ENCODE measurements at regions of chr2 and their contacts with region 1.

Region 1: GRCh38 chr2:98518090-98518489 is 73.4 kb downstream of the INPP4A start:
- DNase-seq: peak; percentile 38 to 77 (median 62)
- ATAC-seq: peak; percentile 85 to 89 (median 86)
- H3K4me3 ChIP-seq: no peak overlapping the region
- H3K4me3 Mint-ChIP-seq: no peak overlapping the region
- H3K27ac ChIP-seq: no peak overlapping the region
- H3K27ac Mint-ChIP-seq: peak overlapping the region in 1 of 2 donors; percentile 55
- H3K4me1 ChIP-seq: peaks cover 8 to 46% of the 10 kb centered on the region in 2 experiments
- H3K4me1 Mint-ChIP-seq: peaks cover 53 to 60% (median 57%) of the 10 kb centered on the region in 3 donors
- H3K27me3 ChIP-seq: no peaks in the 10 kb centered on the region
- H3K27me3 Mint-ChIP-seq: no peaks in the 10 kb centered on the region

Region 2: GRCh38 chr2:98412751-98413458 is 105.2 kb before region 1 on chr2:
- CTCF ChIA-PET with region 1: interaction called, 8 to 12 read pairs
- POLR2A ChIA-PET with region 1: interaction called in 1 of 2 experiments, 5 read pairs
- DNase-seq: peak in 33 of 35 experiments; percentile 13 to 89 (median 43)
- ATAC-seq: peak; percentile 84 to 90 (median 84)
- H3K4me3 ChIP-seq: no peak overlapping the region
- H3K4me3 Mint-ChIP-seq: no peak overlapping the region
- H3K27ac ChIP-seq: no peak overlapping the region
- H3K27ac Mint-ChIP-seq: peak overlapping the region in 1 of 2 donors; percentile 39
- H3K4me1 ChIP-seq: peaks cover 5 to 8% of the 10 kb centered on the region in 2 experiments
- H3K4me1 Mint-ChIP-seq: peaks cover 4 to 6% (median 6%) of the 10 kb centered on the region in 3 donors
- H3K27me3 ChIP-seq: no peaks in the 10 kb centered on the region
- H3K27me3 Mint-ChIP-seq: no peaks in the 10 kb centered on the region

Region 3: DNA sequence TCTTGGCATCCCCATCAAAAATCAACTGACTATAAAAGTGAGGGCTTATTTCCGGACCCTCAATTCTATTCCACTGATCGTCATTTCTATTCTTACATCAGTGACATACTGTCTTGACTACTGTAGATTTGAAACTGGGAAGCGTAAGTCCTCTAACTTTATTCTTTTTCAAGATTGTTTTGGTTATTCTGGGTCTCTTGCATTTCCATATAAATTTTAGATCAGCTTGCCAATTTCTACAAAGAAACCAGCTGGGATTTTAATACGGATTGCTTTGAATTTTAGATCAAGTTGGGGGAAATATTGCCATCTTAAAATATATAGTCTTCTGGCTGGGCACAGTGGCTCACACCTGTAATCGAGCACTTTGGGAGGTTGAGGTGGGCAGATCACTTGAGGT is 91.3 kb before region 1 on chr2:
- CTCF ChIA-PET with region 1: no interaction called
- POLR2A ChIA-PET with region 1: no interaction called
- DNase-seq: no peak
- ATAC-seq: no peak
- H3K4me3 ChIP-seq: no peak overlapping the region
- H3K4me3 Mint-ChIP-seq: no peak overlapping the region
- H3K27ac ChIP-seq: no peak overlapping the region
- H3K27ac Mint-ChIP-seq: no peak overlapping the region
- H3K4me1 ChIP-seq: no peaks in the 10 kb centered on the region
- H3K4me1 Mint-ChIP-seq: no peaks in the 10 kb centered on the region
- H3K27me3 ChIP-seq: no peaks in the 10 kb centered on the region
- H3K27me3 Mint-ChIP-seq: no peaks in the 10 kb centered on the region

Region 4: GRCh38 chr2:98577313-98577712 is 59.2 kb after region 1 on chr2:
- CTCF ChIA-PET with region 1: no interaction called
- POLR2A ChIA-PET with region 1: no interaction called
- DNase-seq: no peak
- ATAC-seq: no peak
- H3K4me3 ChIP-seq: no peak overlapping the region
- H3K4me3 Mint-ChIP-seq: no peak overlapping the region
- H3K27ac ChIP-seq: no peak overlapping the region
- H3K27ac Mint-ChIP-seq: no peak overlapping the region
- H3K4me1 ChIP-seq: no peaks in the 10 kb centered on the region
- H3K4me1 Mint-ChIP-seq: no peaks in the 10 kb centered on the region
- H3K27me3 ChIP-seq: no peaks in the 10 kb centered on the region
- H3K27me3 Mint-ChIP-seq: no peaks in the 10 kb centered on the region

Region 5: DNA sequence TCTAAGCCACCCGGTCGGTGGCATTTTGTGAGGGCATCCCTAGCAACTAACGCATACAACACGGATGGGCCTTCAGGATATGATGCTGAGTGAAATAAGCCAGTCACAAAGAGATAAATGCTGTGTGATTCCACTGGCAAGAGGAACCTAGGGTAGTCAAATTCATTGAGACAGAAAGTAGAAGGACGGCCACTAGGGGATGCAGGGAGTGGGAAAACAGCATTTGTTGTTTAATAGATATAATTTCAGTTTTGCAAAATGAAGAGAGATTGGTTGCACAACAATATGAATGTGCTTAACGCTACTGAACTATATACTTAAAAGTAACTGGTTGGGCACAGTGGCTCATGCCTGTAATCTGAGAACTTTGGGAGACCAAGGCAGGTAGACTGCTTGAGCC is 1511.4 kb after region 1 on chr2:
- CTCF ChIA-PET with region 1: no interaction called
- POLR2A ChIA-PET with region 1: no interaction called
- DNase-seq: no peak
- ATAC-seq: no peak
- H3K4me3 ChIP-seq: no peak overlapping the region
- H3K4me3 Mint-ChIP-seq: no peak overlapping the region
- H3K27ac ChIP-seq: no peak overlapping the region
- H3K27ac Mint-ChIP-seq: no peak overlapping the region
- H3K4me1 ChIP-seq: no peaks in the 10 kb centered on the region
- H3K4me1 Mint-ChIP-seq: no peaks in the 10 kb centered on the region
- H3K27me3 ChIP-seq: no peaks in the 10 kb centered on the region
- H3K27me3 Mint-ChIP-seq: no peaks in the 10 kb centered on the region